Mammary epithelial cell (primary cell): ENCODE measurements at regions of chr5 and their contacts with region 1.

Region 1: GRCh38 chr5:90055831-90056328 is 353.7 kb downstream of the CETN3 start:
- DNase-seq: peak; percentile 10
- H3K4me3 ChIP-seq: no peak overlapping the region
- H3K27ac ChIP-seq: no peak overlapping the region
- H3K4me1 ChIP-seq: peaks cover 7% of the 10 kb centered on the region
- H3K27me3 ChIP-seq: peaks cover 3% of the 10 kb centered on the region
- CTCF ChIP-seq: no peak

Region 2: DNA sequence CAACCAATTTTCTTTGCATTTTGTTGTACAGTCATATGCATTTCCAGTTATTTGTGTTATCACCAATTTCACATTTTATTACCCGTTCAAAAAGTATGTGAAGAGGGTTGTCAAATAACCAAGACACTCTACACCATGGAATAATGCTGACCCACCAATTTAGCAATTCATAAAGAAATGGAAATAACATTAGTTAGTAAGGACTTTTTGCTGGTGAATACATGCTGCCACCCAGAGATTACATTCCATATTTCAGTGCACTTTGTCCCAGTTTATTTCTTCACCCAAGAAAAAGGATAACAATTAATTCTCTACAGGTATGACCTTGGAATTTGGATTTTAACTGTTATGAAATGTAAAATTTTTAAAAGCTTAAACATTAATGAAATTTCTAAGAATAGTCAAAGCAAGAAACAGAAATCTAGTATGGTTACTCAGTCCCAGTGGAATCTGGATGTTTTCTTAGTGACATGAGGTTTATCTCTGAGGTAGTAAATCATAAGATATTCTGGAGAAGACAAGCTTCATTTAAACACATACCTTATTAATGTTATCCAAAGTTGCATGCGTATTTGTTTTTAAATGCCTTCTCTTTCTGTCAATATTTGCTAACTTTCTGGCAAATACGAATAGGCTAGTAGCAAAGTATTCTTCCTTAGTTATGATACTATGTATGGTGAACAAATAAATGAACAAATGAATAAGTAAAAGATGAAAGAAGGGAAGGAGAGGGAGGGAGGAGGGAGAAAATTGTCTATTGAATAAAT is 253.1 kb after region 1 on chr5:
- CTCF ChIA-PET with region 1: no interaction called
- dilution Hi-C with region 1: no loop called
- in situ Hi-C with region 1: no loop called
- intact Hi-C with region 1: loop called (anchors 5 kb)
- DNase-seq: no peak
- H3K4me3 ChIP-seq: no peak overlapping the region
- H3K27ac ChIP-seq: no peak overlapping the region
- H3K4me1 ChIP-seq: no peaks in the 10 kb centered on the region
- H3K27me3 ChIP-seq: no peaks in the 10 kb centered on the region
- CTCF ChIP-seq: no peak

Region 3: GRCh38 chr5:90398726-90399125 is 342.8 kb after region 1 on chr5:
- CTCF ChIA-PET with region 1: no interaction called
- dilution Hi-C with region 1: no loop called
- in situ Hi-C with region 1: no loop called
- intact Hi-C with region 1: no loop called
- DNase-seq: no peak
- H3K4me3 ChIP-seq: no peak overlapping the region
- H3K27ac ChIP-seq: no peak overlapping the region
- H3K4me1 ChIP-seq: peaks cover 7% of the 10 kb centered on the region
- H3K27me3 ChIP-seq: no peaks in the 10 kb centered on the region
- CTCF ChIP-seq: no peak